ENCODE measurements at regions of chrX and their contacts with region 1.

Region 1: DNA sequence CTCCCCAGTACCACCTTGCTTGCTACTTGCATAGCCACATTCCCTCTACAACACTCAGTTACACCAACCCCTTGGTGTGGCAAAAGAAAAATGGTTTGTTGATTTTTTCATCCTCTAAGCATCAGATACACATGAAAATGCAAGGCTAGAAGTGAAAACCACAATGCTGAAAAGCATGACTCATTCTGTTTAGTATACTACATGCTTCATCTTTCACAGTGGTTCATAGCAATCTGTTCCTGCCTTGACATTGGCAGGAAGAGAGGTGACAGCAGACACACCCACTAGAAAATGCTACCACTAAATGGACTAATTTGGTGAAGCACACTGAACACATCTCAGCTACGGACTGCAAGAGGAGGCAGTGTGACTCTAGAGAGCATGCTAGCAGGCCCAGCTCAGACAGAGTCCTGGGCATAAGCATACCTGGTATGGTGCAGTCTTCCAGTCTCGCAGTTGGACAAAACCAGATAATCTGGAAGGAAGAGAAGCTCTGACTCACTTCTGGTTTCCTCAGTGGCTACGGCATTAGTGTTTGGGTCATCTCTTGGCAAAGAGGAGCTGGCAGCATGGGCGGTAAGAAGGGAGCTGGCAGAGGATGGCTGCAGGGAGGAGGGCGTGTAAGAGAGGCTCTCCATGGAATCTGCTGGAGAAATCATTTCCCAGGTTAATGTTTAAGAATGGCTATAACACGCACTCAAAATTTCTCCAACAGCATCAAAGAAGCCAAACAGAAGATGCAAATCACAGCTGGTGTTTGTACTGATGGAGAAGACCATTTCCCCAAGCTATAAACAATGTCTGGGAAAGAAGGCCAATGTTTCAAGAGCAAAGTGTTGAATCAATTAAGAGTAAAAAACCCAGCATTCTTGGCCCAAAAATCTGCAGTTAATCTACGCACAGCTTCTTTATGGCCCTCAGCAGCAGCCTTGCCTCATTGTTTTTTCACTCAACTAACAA is 37.8 kb downstream of the GAB3 start:
- DNase-seq: peak; percentile 30
- ATAC-seq: peak; percentile 93
- H3K4me3 Mint-ChIP-seq: no peak overlapping the region
- H3K27ac Mint-ChIP-seq: peak overlapping the region; percentile 55
- H3K4me1 Mint-ChIP-seq: peaks cover 38% of the 10 kb centered on the region
- H3K27me3 Mint-ChIP-seq: no peaks in the 10 kb centered on the region
- CTCF ChIP-seq: no peak

Region 2: GRCh38 chrX:154727871-154728270 is 14.8 kb after region 1 on chrX:
- CTCF ChIA-PET with region 1: interaction called, 35 read pairs
- POLR2A ChIA-PET with region 1: interaction called, 31 read pairs
- intact Hi-C with region 1: no loop called
- DNase-seq: no peak
- ATAC-seq: no peak
- H3K4me3 Mint-ChIP-seq: no peak overlapping the region
- H3K27ac Mint-ChIP-seq: no peak overlapping the region
- H3K4me1 Mint-ChIP-seq: peaks cover 93% of the 10 kb centered on the region
- H3K27me3 Mint-ChIP-seq: no peaks in the 10 kb centered on the region
- CTCF ChIP-seq: no peak

Region 3: DNA sequence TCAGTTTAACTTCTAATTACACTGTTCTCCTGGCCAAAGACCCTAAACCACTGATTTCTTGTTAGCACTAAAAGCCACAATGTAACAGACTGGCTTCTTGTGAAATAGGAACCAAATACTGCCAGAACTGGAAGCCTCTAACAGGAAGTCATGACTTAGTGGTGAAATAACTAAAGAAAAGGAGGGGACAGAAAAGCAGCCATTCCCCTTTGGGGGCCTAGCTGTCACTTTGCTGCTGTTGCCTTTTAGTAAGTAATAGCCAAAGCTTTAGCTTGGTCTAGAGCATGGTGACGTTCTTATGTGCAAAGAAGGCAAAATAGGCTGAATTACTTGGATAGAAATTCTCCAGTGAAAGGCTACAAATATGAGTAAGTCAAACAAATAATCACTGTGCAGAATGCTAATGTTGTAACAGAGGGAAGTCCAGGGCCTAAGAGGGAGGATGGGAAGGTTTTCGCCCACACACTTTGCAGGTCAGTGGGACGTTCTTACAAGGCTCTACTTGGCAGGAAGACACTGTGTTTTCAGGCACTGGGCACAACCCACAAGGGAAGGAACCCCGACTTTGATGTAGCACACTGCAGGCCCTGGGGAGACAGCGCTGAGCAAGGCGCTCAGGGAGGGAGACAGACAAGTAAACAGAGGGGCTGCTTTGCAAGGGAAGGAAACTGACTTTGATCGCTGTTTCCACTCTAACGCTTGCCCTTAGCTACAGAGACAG is 21.2 kb after region 1 on chrX:
- CTCF ChIA-PET with region 1: interaction called, 35 read pairs
- POLR2A ChIA-PET with region 1: interaction called, 31 read pairs
- intact Hi-C with region 1: no loop called
- DNase-seq: peak; percentile 45
- ATAC-seq: peak; percentile 58
- H3K4me3 Mint-ChIP-seq: peak overlapping the region; percentile 64
- H3K27ac Mint-ChIP-seq: peak overlapping the region; percentile 96
- H3K4me1 Mint-ChIP-seq: peaks cover 98% of the 10 kb centered on the region
- H3K27me3 Mint-ChIP-seq: no peaks in the 10 kb centered on the region
- CTCF ChIP-seq: no peak